Activated naive CD4-positive, alpha-beta T cell treated with anti-CD3 and anti-CD28 coated beads for 36 hours (primary cell): ENCODE measurements at regions of chr19 and their contacts with region 1.

Region 1: GRCh38 chr19:7705387-7706187 is 3.7 kb upstream of the FCER2 start:
- DNase-seq: peak; percentile 94
- H3K4me3 Mint-ChIP-seq: peak overlapping the region; percentile 54
- H3K27ac Mint-ChIP-seq: peak overlapping the region; percentile 67
- H3K4me1 Mint-ChIP-seq: peaks cover 45% of the 10 kb centered on the region
- H3K27me3 Mint-ChIP-seq: no peaks in the 10 kb centered on the region

Region 2: GRCh38 chr19:7738023-7738422 is 32.4 kb after region 1 on chr19:
- CTCF ChIA-PET with region 1: no interaction called
- intact Hi-C with region 1: loop called (anchors 1 kb)
- DNase-seq: peak; percentile 53
- H3K4me3 Mint-ChIP-seq: no peak overlapping the region
- H3K27ac Mint-ChIP-seq: peak overlapping the region; percentile 11
- H3K4me1 Mint-ChIP-seq: peaks cover 14% of the 10 kb centered on the region
- H3K27me3 Mint-ChIP-seq: peaks cover 26% of the 10 kb centered on the region

Region 3: GRCh38 chr19:7772752-7773291 is 67.2 kb after region 1 on chr19:
- CTCF ChIA-PET with region 1: no interaction called
- intact Hi-C with region 1: loop called (anchors 1 kb)
- DNase-seq: peak; percentile 71
- H3K4me3 Mint-ChIP-seq: no peak overlapping the region
- H3K27ac Mint-ChIP-seq: peak overlapping the region; percentile 77
- H3K4me1 Mint-ChIP-seq: peaks cover 27% of the 10 kb centered on the region
- H3K27me3 Mint-ChIP-seq: peaks cover 4% of the 10 kb centered on the region

Region 4: DNA sequence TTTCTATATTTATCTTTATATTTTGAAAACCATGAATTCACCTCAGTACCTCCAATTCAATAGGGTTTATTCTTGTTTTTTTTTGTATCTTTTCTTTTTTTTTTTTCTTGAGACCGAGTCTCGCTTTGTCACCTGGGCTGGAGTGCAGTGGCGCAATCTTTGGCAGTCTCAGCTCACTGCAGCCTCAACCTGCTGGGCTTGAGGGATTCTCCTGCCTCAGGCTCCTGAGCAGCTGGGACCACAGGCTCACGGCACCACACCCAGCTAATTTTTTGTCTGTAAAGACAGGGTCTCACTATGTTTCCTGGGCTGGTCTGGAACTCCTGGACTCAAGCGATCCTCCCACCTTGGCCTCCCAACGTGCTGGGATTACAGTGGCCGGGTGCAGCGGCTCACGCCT is 101.3 kb after region 1 on chr19:
- CTCF ChIA-PET with region 1: no interaction called
- intact Hi-C with region 1: loop called (anchors 1 kb)
- DNase-seq: no peak
- H3K4me3 Mint-ChIP-seq: no peak overlapping the region
- H3K27ac Mint-ChIP-seq: no peak overlapping the region
- H3K4me1 Mint-ChIP-seq: peaks cover 12% of the 10 kb centered on the region
- H3K27me3 Mint-ChIP-seq: peaks cover 24% of the 10 kb centered on the region

Region 5: DNA sequence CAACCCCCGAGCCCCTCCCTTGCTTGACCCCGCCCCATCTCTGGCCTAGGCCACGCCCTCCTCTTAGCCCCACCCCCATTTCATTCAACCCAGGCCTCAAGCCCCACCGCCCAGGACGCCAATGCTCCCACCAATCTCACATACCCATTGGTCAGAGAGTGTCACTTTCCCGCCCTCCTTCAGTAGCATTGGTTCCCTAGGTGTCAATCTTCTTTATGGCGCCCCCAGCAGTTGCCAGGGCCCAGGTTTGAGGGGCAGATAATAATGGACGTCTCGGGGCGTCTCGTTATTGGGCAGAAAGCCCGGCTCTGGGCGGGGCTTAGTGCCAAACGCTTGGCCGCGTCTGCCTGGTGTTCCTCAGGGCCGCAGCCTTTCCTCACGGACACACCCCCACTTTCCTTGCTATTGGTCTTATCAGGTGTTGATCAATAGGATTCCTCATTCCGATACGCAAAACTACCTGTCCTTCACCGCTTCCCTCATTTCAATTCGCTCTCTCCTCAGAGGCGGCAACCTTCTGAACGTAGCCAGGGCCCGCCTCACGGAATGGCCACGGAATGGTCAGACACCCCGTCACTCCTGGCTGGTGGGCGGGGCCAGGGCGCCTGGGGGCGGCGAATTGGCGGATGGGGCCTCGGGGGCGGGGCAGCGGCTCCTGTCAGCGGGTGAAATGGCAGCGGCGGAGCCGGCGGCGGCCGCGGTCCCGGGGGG is 124.1 kb after region 1 on chr19 and contains the start of gene EVI5L:
- CTCF ChIA-PET with region 1: no interaction called
- intact Hi-C with region 1: no loop called
- DNase-seq: peak; percentile 99
- H3K4me3 Mint-ChIP-seq: peak within 1 kb of the TSS; percentile 84
- H3K27ac Mint-ChIP-seq: peak within 1 kb of the TSS; percentile 68
- H3K4me1 Mint-ChIP-seq: peaks cover 18% of the 10 kb centered on the region
- H3K27me3 Mint-ChIP-seq: peaks cover 6% of the 10 kb centered on the region
- total RNA-seq, gene EVI5L: 5.2 TPM